AG04450 (cell line): ENCODE measurements at regions of chr1 and their contacts with region 1.

Region 1: GRCh38 chr1:53878492-53879105 is 11.0 kb downstream of the YIPF1 start:
- DNase-seq: peak; percentile 13
- H3K4me3 ChIP-seq: no peak overlapping the region
- H3K27ac ChIP-seq: no peak overlapping the region
- H3K27me3 ChIP-seq: no peaks in the 10 kb centered on the region
- CTCF ChIP-seq: peak; percentile 71

Region 2: DNA sequence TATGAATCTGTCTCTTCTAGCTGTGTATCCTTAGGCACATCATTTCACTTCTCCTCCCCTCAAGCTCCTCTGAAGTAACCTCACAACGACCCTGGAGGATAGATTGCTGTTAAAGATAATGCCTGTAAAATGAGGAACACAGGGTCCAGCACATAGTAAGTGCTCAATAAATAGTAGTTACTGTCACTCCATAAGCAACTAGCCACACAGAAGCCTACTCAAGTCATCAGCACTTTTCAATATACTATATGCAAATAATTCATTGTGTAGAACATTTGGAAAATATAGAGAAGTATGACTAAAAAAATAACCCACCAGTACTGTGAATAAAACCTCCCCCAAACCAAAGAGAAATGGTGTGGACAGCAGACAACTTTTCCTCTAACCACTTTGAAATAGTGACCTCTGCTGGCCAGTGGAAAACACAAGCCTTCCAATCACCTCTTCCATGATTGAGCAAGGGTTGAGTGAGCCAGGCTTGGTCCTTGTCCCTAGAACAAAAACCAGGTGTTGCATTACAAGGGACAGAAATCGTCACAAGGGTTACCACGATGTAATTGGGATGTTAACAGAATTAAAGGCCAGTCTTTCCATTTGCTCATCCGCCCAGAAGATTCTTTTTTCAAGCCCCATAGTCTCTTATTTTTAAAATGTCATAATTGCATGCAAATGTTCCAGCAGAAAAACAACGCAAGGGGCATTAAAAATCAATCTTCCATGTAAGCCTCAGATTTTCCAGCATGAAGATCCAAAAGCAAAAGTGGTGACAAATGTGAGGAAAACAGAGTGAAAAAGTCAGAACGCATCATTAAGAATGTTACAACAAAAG is 123.9 kb before region 1 on chr1:
- CTCF ChIA-PET with region 1: no interaction called
- POLR2A ChIA-PET with region 1: no interaction called
- DNase-seq: no peak
- H3K4me3 ChIP-seq: no peak overlapping the region
- H3K27ac ChIP-seq: no peak overlapping the region
- H3K27me3 ChIP-seq: no peaks in the 10 kb centered on the region
- CTCF ChIP-seq: peak; percentile 80

Region 3: GRCh38 chr1:53896635-53897229 is 18.1 kb after region 1 on chr1:
- CTCF ChIA-PET with region 1: interaction called, 11 read pairs
- POLR2A ChIA-PET with region 1: no interaction called
- DNase-seq: peak; percentile 74
- H3K4me3 ChIP-seq: no peak overlapping the region
- H3K27ac ChIP-seq: peak overlapping the region; percentile 83
- H3K27me3 ChIP-seq: no peaks in the 10 kb centered on the region
- CTCF ChIP-seq: no peak

Region 4: DNA sequence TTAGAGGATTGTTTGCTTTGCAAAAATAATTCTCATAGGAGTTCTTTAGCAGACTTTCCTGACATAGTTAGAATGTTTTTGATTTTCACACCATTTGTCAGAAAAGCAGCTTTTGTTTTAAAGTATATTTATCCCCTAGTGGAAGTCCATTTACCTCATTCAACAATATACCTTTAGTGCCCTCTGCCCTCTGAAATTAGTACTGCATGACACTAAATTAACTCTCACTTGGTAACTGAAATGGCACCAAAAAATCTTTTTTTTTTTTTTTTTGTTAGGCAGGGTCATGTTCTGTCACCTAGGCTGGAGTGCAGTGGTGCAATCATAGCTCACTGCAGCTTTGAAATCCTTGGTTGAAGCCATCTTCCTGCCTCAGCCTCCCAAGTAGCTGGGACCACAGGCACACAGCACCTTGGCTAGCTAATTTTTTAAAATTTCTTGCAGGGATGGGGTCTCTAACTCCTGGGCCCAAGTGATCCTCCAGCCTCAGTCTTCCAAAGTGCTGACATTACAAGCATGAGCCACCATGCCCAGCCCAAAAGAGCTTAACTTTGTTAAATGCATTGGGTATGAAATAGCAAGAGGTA is 81.2 kb after region 1 on chr1:
- CTCF ChIA-PET with region 1: interaction called, 55 read pairs
- POLR2A ChIA-PET with region 1: interaction called, 4 read pairs
- DNase-seq: no peak
- H3K4me3 ChIP-seq: no peak overlapping the region
- H3K27ac ChIP-seq: no peak overlapping the region
- H3K27me3 ChIP-seq: no peaks in the 10 kb centered on the region
- CTCF ChIP-seq: peak; percentile 46